ENCODE measurements at regions of chr2 and their contacts with region 1.

Region 1: GRCh38 chr2:174465327-174465726 is 21.5 kb downstream of the GPR155 start:
- DNase-seq: no peak
- ATAC-seq: no peak
- H3K4me3 ChIP-seq: no peak overlapping the region
- H3K4me3 Mint-ChIP-seq: no peak overlapping the region
- H3K27ac ChIP-seq: no peak overlapping the region
- H3K27ac Mint-ChIP-seq: peak overlapping the region in 2 of 9 donors; percentile 31 to 49
- H3K4me1 ChIP-seq: no peaks in the 10 kb centered on the region
- H3K4me1 Mint-ChIP-seq: peaks cover 0 to 7% (median 0%) of the 10 kb centered on the region in 7 donors
- H3K27me3 ChIP-seq: no peaks in the 10 kb centered on the region
- H3K27me3 Mint-ChIP-seq: no peaks in the 10 kb centered on the region

Region 2: GRCh38 chr2:173239644-173240043 is 1225.7 kb before region 1 on chr2:
- CTCF ChIA-PET with region 1: no interaction called
- POLR2A ChIA-PET with region 1: no interaction called
- intact Hi-C with region 1: no loop called
- DNase-seq: no peak
- ATAC-seq: no peak
- H3K4me3 ChIP-seq: no peak overlapping the region
- H3K4me3 Mint-ChIP-seq: no peak overlapping the region
- H3K27ac ChIP-seq: no peak overlapping the region
- H3K27ac Mint-ChIP-seq: no peak overlapping the region
- H3K4me1 ChIP-seq: no peaks in the 10 kb centered on the region
- H3K4me1 Mint-ChIP-seq: peaks cover 0 to 4% (median 0%) of the 10 kb centered on the region in 7 donors
- H3K27me3 ChIP-seq: peaks cover 0 to 2% of the 10 kb centered on the region in 2 donors
- H3K27me3 Mint-ChIP-seq: peaks cover 0 to 20% (median 8%) of the 10 kb centered on the region in 5 donors

Region 3: GRCh38 chr2:173402405-173402974 is 1062.8 kb before region 1 on chr2:
- CTCF ChIA-PET with region 1: no interaction called
- POLR2A ChIA-PET with region 1: no interaction called
- intact Hi-C with region 1: loop called in 1 of 2 experiments (anchors 5 kb)
- DNase-seq: peak; percentile 40 to 74 (median 67)
- ATAC-seq: peak; percentile 87
- H3K4me3 ChIP-seq: no peak overlapping the region
- H3K4me3 Mint-ChIP-seq: peak overlapping the region in 1 of 10 donors; percentile 62
- H3K27ac ChIP-seq: no peak overlapping the region
- H3K27ac Mint-ChIP-seq: no peak overlapping the region
- H3K4me1 ChIP-seq: peaks cover 0 to 3% of the 10 kb centered on the region in 2 donors
- H3K4me1 Mint-ChIP-seq: peaks cover 0 to 12% (median 4%) of the 10 kb centered on the region in 7 donors
- H3K27me3 ChIP-seq: peaks cover 3 to 7% of the 10 kb centered on the region in 2 donors
- H3K27me3 Mint-ChIP-seq: peaks cover 55 to 73% (median 62%) of the 10 kb centered on the region in 5 donors

Region 4: DNA sequence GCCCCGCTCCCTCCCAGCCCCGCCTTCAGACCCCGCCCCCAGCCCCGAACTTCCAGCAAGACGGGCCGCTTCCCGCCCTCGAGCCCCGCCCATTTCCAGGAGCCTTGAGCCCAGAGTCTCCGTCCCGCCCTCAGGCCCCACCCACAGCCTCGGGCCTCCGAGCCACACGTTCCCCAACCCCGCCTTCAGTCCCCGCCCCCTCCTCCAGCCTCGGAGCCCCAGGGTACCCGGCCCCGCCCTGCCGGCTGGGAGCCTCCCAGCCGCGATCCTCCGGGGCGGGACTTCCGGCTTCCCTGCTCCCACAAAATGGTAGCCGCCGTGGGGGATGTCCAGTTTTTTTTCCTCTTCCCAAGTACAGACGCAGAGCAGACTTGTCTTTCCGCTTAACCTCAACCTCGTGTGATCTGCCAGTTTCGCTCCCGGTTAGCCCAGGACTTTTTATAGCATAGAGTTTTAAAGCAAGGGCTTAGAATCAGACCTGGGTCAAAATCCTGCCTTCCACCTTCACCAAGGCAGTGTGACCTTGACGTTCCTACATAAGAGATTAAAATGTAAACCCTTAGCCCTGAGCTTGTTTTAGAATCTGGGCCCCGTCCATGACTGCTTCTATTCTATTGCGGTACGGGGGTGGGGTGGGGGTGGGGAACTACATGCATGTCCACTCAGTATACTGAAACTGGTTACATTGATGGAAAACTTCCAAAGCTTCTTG is 21.9 kb after region 1 on chr2:
- CTCF ChIA-PET with region 1: interaction called, 25 read pairs
- POLR2A ChIA-PET with region 1: interaction called, 17 read pairs
- intact Hi-C with region 1: loop called in 1 of 2 experiments (anchors 1 kb)
- DNase-seq: peak; percentile 66 to 93 (median 78)
- ATAC-seq: peak; percentile 89
- H3K4me3 ChIP-seq: peak overlapping the region; percentile 90
- H3K4me3 Mint-ChIP-seq: peak overlapping the region; percentile 92 to 100 (median 98)
- H3K27ac ChIP-seq: peak overlapping the region; percentile 87
- H3K27ac Mint-ChIP-seq: peak overlapping the region; percentile 88 to 100 (median 96)
- H3K4me1 ChIP-seq: peaks cover 31 to 38% of the 10 kb centered on the region in 2 donors
- H3K4me1 Mint-ChIP-seq: peaks cover 37 to 83% (median 77%) of the 10 kb centered on the region in 7 donors
- H3K27me3 ChIP-seq: no peaks in the 10 kb centered on the region
- H3K27me3 Mint-ChIP-seq: no peaks in the 10 kb centered on the region

Region 5: GRCh38 chr2:174522553-174522952 is 57.2 kb after region 1 on chr2:
- CTCF ChIA-PET with region 1: interaction called, 99 read pairs
- POLR2A ChIA-PET with region 1: interaction called, 6 read pairs
- intact Hi-C with region 1: loop called (anchors 1 kb)
- DNase-seq: peak in 2 of 9 donors; percentile 10 to 13
- ATAC-seq: peak; percentile 49
- H3K4me3 ChIP-seq: no peak overlapping the region
- H3K4me3 Mint-ChIP-seq: no peak overlapping the region
- H3K27ac ChIP-seq: no peak overlapping the region
- H3K27ac Mint-ChIP-seq: no peak overlapping the region
- H3K4me1 ChIP-seq: peaks cover 0 to 5% of the 10 kb centered on the region in 2 donors
- H3K4me1 Mint-ChIP-seq: peaks cover 10 to 28% (median 21%) of the 10 kb centered on the region in 7 donors
- H3K27me3 ChIP-seq: no peaks in the 10 kb centered on the region
- H3K27me3 Mint-ChIP-seq: peaks cover 0 to 23% (median 0%) of the 10 kb centered on the region in 5 donors

Region 6: DNA sequence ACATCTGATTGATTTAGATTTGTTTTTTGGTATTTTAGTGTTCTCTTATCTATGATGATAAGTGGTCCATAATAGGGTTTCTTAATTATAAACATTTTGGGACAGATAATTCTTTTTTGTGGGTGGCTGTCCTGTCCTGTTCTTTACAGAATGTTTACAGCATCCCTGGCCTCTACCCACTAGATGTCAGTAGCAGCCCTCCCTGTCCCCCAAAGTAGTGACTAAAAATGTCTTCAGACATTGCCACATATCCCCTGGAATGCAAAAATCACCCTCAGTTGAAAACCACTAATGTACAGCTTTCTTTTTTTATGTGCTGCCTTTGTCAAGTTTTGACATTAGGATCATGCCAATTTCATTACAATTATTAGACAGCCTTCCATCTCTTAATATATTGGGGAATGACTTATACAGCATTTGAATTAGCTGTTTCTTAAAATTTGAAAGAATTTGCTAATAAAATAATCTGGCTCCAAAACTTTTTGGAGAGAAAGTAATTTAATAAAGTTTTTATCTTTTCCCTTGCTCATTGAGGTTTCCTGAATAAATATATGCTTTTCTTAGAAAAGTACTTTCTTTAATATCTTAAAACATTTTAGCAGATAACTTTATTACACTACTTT is 112.8 kb after region 1 on chr2:
- CTCF ChIA-PET with region 1: interaction called, 22 read pairs
- POLR2A ChIA-PET with region 1: interaction called, 3 read pairs
- intact Hi-C with region 1: loop called in 1 of 2 experiments (anchors 1 kb)
- DNase-seq: peak in 7 of 9 donors; percentile 55 to 77 (median 68)
- ATAC-seq: peak; percentile 86
- H3K4me3 ChIP-seq: no peak overlapping the region
- H3K4me3 Mint-ChIP-seq: peak overlapping the region in 1 of 10 donors; percentile 27
- H3K27ac ChIP-seq: peak overlapping the region; percentile 33
- H3K27ac Mint-ChIP-seq: peak overlapping the region in 8 of 9 donors; percentile 46 to 91 (median 81)
- H3K4me1 ChIP-seq: peaks cover 56 to 74% of the 10 kb centered on the region in 2 donors
- H3K4me1 Mint-ChIP-seq: peaks cover 31 to 91% (median 77%) of the 10 kb centered on the region in 7 donors
- H3K27me3 ChIP-seq: no peaks in the 10 kb centered on the region
- H3K27me3 Mint-ChIP-seq: no peaks in the 10 kb centered on the region

Region 7: GRCh38 chr2:174603280-174603679 is 138.0 kb after region 1 on chr2:
- CTCF ChIA-PET with region 1: interaction called, 30 read pairs
- POLR2A ChIA-PET with region 1: interaction called, 8 read pairs
- intact Hi-C with region 1: loop called in 1 of 2 experiments (anchors 1 kb)
- DNase-seq: peak in 7 of 9 donors; percentile 47 to 67 (median 58)
- ATAC-seq: peak; percentile 79
- H3K4me3 ChIP-seq: no peak overlapping the region
- H3K4me3 Mint-ChIP-seq: peak overlapping the region in 8 of 10 donors; percentile 7 to 87 (median 26)
- H3K27ac ChIP-seq: peak overlapping the region; percentile 46
- H3K27ac Mint-ChIP-seq: peak overlapping the region; percentile 77 to 98 (median 93)
- H3K4me1 ChIP-seq: peaks cover 57 to 75% of the 10 kb centered on the region in 2 donors
- H3K4me1 Mint-ChIP-seq: peaks cover 70 to 97% (median 94%) of the 10 kb centered on the region in 7 donors
- H3K27me3 ChIP-seq: no peaks in the 10 kb centered on the region
- H3K27me3 Mint-ChIP-seq: no peaks in the 10 kb centered on the region

Region 8: GRCh38 chr2:174688079-174688478 is 222.8 kb after region 1 on chr2:
- CTCF ChIA-PET with region 1: interaction called, 66 read pairs
- POLR2A ChIA-PET with region 1: interaction called, 8 read pairs
- intact Hi-C with region 1: loop called (anchors 1 kb)
- DNase-seq: peak in 6 of 9 donors; percentile 36 to 63 (median 45)
- ATAC-seq: peak; percentile 73
- H3K4me3 ChIP-seq: no peak overlapping the region
- H3K4me3 Mint-ChIP-seq: peak overlapping the region in 1 of 10 donors; percentile 40
- H3K27ac ChIP-seq: no peak overlapping the region
- H3K27ac Mint-ChIP-seq: peak overlapping the region in 7 of 9 donors; percentile 14 to 82 (median 21)
- H3K4me1 ChIP-seq: peaks cover 0 to 6% of the 10 kb centered on the region in 2 donors
- H3K4me1 Mint-ChIP-seq: peaks cover 19 to 45% (median 30%) of the 10 kb centered on the region in 7 donors
- H3K27me3 ChIP-seq: no peaks in the 10 kb centered on the region
- H3K27me3 Mint-ChIP-seq: peaks cover 0 to 6% (median 0%) of the 10 kb centered on the region in 5 donors

Measured in naive thymus-derived CD4-positive, alpha-beta T cell (primary cell).